Mammary epithelial cell (primary cell): ENCODE measurements at regions of chr3 and their contacts with region 1.

Region 1: GRCh38 chr3:142224482-142225072 is 808 bp downstream of the GK5 start:
- DNase-seq: no peak
- H3K4me3 ChIP-seq: peak overlapping the region; percentile 84 to 87 (median 84)
- H3K27ac ChIP-seq: peak overlapping the region; percentile 47
- H3K4me1 ChIP-seq: no peaks in the 10 kb centered on the region
- H3K27me3 ChIP-seq: no peaks in the 10 kb centered on the region
- CTCF ChIP-seq: no peak

Region 2: DNA sequence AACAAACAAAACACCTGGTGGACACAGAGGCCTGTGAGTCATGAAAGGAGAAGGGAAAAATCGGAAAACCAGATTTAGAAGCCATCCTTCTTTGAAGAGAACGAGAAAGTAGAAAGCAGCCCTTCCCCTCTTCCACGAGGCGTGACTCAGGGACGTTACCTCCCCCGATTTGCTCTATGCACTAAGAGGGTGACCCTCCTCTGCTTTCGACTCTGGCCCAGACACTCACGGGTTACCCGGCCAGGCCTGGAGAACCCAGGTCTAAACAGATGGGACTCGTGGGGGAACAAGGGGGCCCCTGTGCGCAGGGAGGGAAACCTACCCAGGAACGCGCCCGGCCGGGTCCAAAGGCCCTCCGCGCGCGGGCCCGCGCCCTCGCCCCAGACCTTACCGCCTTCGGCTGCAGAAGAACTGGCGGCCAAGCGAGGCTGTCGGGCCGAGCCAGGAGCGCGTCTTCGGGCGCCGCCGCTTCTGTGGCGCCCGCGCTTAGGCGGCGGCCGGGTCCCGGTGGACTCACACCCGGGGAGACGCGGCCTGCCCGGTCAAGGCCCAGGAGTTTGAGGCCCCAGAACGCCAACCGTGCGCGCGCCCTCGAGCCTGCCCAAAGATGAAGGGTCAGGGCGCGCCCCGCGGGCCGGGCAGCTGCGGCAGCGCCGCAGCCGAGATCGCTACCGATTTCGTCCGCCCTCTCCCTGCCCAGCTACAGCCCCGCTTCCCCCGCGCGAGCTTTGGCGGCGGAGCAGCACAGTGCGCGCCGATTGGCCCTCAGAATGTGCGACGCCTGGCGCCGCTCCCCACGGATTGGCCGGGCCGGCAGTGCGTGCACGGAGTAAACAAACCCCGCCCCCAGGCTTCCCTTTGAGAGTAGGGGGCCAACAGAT is 75.5 kb before region 1 on chr3 and contains the start of gene TFDP2:
- CTCF ChIA-PET with region 1: no interaction called
- dilution Hi-C with region 1: no loop called
- in situ Hi-C with region 1: no loop called
- intact Hi-C with region 1: loop called (anchors 1 kb)
- DNase-seq: peak; percentile 86
- H3K4me3 ChIP-seq: peak within 1 kb of the TSS; percentile 72 to 84 (median 74)
- H3K27ac ChIP-seq: peak within 1 kb of the TSS; percentile 85
- H3K4me1 ChIP-seq: peaks cover 22% of the 10 kb centered on the region
- H3K27me3 ChIP-seq: no peaks in the 10 kb centered on the region
- CTCF ChIP-seq: no peak
- total RNA-seq, gene TFDP2: 28.6 to 48.5 TPM